ENCODE measurements at regions of chr12 and their contacts with region 1.

Region 1: GRCh38 chr12:12786716-12787601 is 1.5 kb downstream of the APOLD1 start:
- DNase-seq: peak; percentile 44 to 92 (median 68)
- ATAC-seq: peak; percentile 87
- H3K4me3 ChIP-seq: peak overlapping the region; percentile 79
- H3K4me3 Mint-ChIP-seq: peak overlapping the region; percentile 93
- H3K27ac ChIP-seq: peak overlapping the region; percentile 64 to 75
- H3K27ac Mint-ChIP-seq: peak overlapping the region; percentile 83
- H3K4me1 ChIP-seq: peaks cover 27% of the 10 kb centered on the region
- H3K4me1 Mint-ChIP-seq: peaks cover 20% of the 10 kb centered on the region
- H3K27me3 ChIP-seq: no peaks in the 10 kb centered on the region
- H3K27me3 Mint-ChIP-seq: no peaks in the 10 kb centered on the region
- CTCF ChIP-seq: no peak

Region 2: DNA sequence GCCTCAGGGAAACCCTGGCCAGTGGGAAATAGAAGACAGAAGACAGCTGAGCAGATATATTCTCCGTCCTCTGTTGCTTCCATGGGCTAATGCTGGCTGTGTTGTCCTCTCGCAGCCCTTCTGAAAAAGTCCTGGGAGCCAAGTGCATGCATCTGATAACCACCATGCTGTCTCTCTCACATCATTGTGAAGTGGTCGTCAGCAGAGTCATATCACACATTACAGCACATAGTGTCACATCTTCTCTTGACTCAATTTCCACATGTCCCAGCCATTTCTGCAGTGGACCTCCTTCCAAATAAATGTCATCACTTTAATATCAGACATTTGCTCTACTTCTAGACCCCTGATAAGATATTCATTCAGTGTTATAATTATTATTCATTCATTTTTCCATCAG is 1792.7 kb before region 1 on chr12:
- CTCF ChIA-PET with region 1: no interaction called
- POLR2A ChIA-PET with region 1: no interaction called
- intact Hi-C with region 1: no loop called
- DNase-seq: no peak
- ATAC-seq: no peak
- H3K4me3 ChIP-seq: no peak overlapping the region
- H3K4me3 Mint-ChIP-seq: no peak overlapping the region
- H3K27ac ChIP-seq: no peak overlapping the region
- H3K27ac Mint-ChIP-seq: no peak overlapping the region
- H3K4me1 ChIP-seq: no peaks in the 10 kb centered on the region
- H3K4me1 Mint-ChIP-seq: no peaks in the 10 kb centered on the region
- H3K27me3 ChIP-seq: no peaks in the 10 kb centered on the region
- H3K27me3 Mint-ChIP-seq: no peaks in the 10 kb centered on the region
- CTCF ChIP-seq: no peak

Region 3: GRCh38 chr12:12807970-12808702 is 21.2 kb after region 1 on chr12:
- CTCF ChIA-PET with region 1: interaction called, 9 read pairs
- POLR2A ChIA-PET with region 1: interaction called, 31 read pairs
- intact Hi-C with region 1: loop called (anchors 1 to 2 kb)
- DNase-seq: peak; percentile 45 to 89 (median 61)
- ATAC-seq: peak; percentile 78
- H3K4me3 ChIP-seq: no peak overlapping the region
- H3K4me3 Mint-ChIP-seq: peak overlapping the region; percentile 72
- H3K27ac ChIP-seq: peak overlapping the region; percentile 70 to 94
- H3K27ac Mint-ChIP-seq: peak overlapping the region; percentile 97
- H3K4me1 ChIP-seq: peaks cover 49% of the 10 kb centered on the region
- H3K4me1 Mint-ChIP-seq: peaks cover 54% of the 10 kb centered on the region
- H3K27me3 ChIP-seq: no peaks in the 10 kb centered on the region
- H3K27me3 Mint-ChIP-seq: no peaks in the 10 kb centered on the region
- CTCF ChIP-seq: no peak

Region 4: DNA sequence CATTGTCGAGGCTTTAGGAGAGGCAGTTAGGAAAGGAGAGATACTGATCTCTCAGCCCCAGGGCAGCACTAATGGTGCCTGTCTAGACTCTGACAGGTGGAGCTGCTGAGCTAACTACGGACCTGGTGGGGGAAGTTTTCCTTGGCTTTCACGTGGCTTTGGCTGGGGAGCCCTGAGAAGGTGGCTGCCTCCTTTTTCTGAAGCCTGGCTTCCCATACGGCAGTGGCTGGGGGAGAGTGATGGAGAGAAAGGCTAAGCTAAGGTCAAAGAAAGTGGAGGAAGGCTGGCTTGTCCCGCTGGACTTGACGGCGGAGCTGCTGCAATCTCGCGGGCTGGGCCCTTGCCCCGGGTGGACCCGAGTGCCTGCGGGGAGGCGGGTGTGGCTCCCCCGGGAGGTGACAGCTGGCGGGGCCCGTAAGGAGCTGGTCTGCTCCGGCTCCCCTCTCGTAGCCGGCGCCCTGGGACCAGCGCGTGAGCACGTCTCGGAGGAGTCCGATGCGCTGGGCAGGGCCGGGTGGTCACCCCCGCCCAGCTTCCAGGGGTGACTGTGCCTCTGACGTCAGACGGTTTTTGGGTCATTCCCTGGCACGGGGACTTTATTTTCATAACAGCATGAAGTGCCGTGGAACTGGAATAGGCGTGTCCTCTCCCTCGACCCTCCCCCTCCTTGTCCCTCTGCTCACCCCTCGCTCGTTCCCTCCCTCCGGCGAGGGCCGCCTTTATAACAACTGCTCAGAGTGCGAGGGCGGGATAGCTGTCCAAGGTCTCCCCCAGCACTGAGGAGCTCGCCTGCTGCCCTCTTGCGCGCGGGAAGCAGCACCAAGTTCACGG is 104.1 kb after region 1 on chr12 and contains the start of gene GPRC5A:
- CTCF ChIA-PET with region 1: no interaction called
- POLR2A ChIA-PET with region 1: interaction called, 3 read pairs
- intact Hi-C with region 1: loop called in 1 of 2 experiments (anchors 2 kb)
- DNase-seq: peak in 13 of 14 experiments; percentile 7 to 61 (median 22)
- ATAC-seq: peak; percentile 66
- H3K4me3 ChIP-seq: peak within 1 kb of the TSS; percentile 55
- H3K4me3 Mint-ChIP-seq: peak within 1 kb of the TSS; percentile 89
- H3K27ac ChIP-seq: no peak within 1 kb of the TSS
- H3K27ac Mint-ChIP-seq: peak within 1 kb of the TSS; percentile 34
- H3K4me1 ChIP-seq: peaks cover 14% of the 10 kb centered on the region
- H3K4me1 Mint-ChIP-seq: peaks cover 19% of the 10 kb centered on the region
- H3K27me3 ChIP-seq: peaks cover 20 to 25% of the 10 kb centered on the region in 2 experiments
- H3K27me3 Mint-ChIP-seq: peaks cover 26% of the 10 kb centered on the region
- CTCF ChIP-seq: no peak
- total RNA-seq, gene GPRC5A: 0.14 to 0.47 TPM

Region 5: GRCh38 chr12:12983420-12984035 is 196.6 kb after region 1 on chr12:
- CTCF ChIA-PET with region 1: no interaction called
- POLR2A ChIA-PET with region 1: no interaction called
- intact Hi-C with region 1: loop called (anchors 2 kb)
- DNase-seq: peak in 4 of 14 experiments; percentile 16 to 41 (median 30)
- ATAC-seq: peak; percentile 44
- H3K4me3 ChIP-seq: no peak overlapping the region
- H3K4me3 Mint-ChIP-seq: no peak overlapping the region
- H3K27ac ChIP-seq: no peak overlapping the region
- H3K27ac Mint-ChIP-seq: no peak overlapping the region
- H3K4me1 ChIP-seq: no peaks in the 10 kb centered on the region
- H3K4me1 Mint-ChIP-seq: no peaks in the 10 kb centered on the region
- H3K27me3 ChIP-seq: no peaks in the 10 kb centered on the region
- H3K27me3 Mint-ChIP-seq: no peaks in the 10 kb centered on the region
- CTCF ChIP-seq: peak; percentile 59

Region 6: GRCh38 chr12:13094347-13094746 is 307.4 kb after region 1 on chr12:
- CTCF ChIA-PET with region 1: no interaction called
- POLR2A ChIA-PET with region 1: no interaction called
- intact Hi-C with region 1: loop called in 1 of 2 experiments (anchors 10 kb)
- DNase-seq: peak in 2 of 14 experiments; percentile 52 to 61
- ATAC-seq: no peak
- H3K4me3 ChIP-seq: no peak overlapping the region
- H3K4me3 Mint-ChIP-seq: no peak overlapping the region
- H3K27ac ChIP-seq: no peak overlapping the region
- H3K27ac Mint-ChIP-seq: no peak overlapping the region
- H3K4me1 ChIP-seq: peaks cover 16% of the 10 kb centered on the region
- H3K4me1 Mint-ChIP-seq: peaks cover 19% of the 10 kb centered on the region
- H3K27me3 ChIP-seq: no peaks in the 10 kb centered on the region
- H3K27me3 Mint-ChIP-seq: no peaks in the 10 kb centered on the region
- CTCF ChIP-seq: no peak

Measured in CD4-positive, alpha-beta T cell (primary cell).